Posterior cingulate gyrus (tissue), 11 donors: ENCODE measurements at regions of chr1 and their contacts with region 1.

Region 1: DNA sequence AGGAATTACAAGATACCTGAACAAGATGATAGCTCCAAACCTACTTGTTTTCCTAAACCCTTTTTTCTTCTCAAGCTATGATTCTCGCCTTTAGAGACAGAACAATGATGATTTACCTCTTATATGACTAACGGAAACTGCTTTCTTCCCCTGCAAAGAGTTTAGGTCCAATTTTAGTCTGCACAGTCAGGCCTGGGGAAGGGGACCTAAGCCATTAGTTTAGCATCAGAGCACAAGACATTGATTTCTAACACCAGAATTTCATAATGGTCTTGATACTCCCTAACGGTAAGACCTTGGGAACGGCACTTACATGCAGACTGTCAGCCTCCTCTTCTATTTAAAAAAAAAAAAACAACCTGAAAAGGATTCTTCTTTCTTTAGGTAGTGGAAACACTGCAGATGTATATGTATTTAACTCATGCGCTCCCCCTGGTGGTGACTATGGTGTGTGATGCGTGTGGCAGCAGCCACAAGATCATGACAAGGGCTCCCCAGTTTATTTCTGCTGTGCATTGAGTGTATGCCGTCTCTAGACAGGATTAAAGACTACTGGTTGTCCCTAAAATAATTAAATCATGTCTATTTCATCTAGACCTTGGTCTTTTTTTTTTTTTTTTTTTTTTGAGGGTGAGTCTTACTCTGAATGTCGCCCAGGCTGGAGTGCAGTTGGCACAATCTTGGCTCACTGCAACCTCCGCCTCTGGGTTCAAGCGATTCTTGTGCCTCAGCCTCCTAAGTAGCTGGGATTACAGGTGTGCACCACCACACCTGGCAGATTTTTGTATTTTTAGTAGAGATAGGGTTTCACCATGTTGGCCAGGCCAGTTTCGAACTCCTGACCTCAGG is 37.3 kb upstream of the TMEM222 start:
- DNase-seq: peak; percentile 53 to 95 (median 86)

Region 2: GRCh38 chr1:27102707-27103491 is 181.8 kb before region 1 on chr1:
- intact Hi-C with region 1: loop called (anchors 1 kb)
- DNase-seq: peak; percentile 73 to 98 (median 90)

Region 3: DNA sequence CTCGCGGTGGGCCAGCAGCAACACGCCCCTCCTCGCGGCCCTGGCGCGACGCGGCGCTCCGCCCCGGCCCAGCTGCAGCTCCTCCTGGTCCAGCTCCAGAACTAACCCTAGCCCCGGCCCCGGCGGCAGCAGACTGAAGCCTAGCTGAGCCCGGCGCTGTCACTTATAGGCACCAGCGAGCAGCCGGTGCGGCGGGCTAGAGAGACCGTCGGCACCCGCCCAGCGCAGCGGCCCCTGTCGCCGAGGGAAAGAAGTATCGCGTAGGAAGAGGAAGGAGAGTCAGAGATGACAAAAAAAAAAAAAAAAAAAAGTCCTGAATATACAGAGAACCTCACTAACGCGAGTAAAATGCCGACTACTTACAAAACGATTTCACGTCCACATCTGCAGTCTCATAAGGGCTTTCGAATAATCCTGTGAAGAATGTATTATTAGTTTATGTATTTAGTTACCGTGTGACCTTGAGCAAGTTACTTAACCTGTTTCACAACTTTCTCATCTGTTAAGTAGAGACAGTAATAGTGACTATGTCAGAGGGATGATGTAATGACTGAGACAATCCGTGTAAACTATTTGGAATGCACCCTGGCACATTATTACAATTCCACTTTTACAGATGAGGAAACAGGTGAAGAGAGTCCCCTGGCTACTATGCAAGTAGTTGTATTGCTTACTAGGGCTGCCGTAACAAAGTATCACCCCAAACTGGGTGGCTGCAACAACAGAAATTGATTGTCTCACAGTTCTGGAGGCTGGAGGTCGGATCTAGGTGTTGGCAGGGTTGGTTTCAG is 129.5 kb before region 1 on chr1 and contains the start of gene SLC9A1:
- intact Hi-C with region 1: no loop called
- DNase-seq: peak; percentile 92 to 99 (median 96)

Region 4: DNA sequence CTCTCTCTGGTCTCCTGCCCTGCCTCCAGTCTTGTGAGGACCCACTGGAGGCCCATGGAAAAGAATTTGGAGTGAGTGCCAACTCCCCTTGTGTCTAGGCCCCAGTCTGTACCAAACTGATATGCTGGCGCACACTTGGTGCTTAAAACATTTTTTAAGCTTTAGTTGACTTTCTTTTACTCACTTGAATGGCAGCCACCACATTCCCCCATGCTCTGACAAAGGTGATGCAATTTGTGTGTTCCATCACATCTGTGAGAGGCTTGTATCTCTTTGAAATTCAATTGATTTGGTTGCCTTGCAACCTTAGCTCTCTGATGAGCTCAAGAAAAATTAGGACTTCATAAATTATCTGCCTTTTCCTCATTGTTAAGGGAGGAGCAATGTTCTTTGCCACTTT is 80.7 kb before region 1 on chr1:
- intact Hi-C with region 1: loop called (anchors 2 kb)
- DNase-seq: no peak